Aorta (tissue), 5 donors: ENCODE measurements at regions of chr5 and their contacts with region 1.

Region 1: DNA sequence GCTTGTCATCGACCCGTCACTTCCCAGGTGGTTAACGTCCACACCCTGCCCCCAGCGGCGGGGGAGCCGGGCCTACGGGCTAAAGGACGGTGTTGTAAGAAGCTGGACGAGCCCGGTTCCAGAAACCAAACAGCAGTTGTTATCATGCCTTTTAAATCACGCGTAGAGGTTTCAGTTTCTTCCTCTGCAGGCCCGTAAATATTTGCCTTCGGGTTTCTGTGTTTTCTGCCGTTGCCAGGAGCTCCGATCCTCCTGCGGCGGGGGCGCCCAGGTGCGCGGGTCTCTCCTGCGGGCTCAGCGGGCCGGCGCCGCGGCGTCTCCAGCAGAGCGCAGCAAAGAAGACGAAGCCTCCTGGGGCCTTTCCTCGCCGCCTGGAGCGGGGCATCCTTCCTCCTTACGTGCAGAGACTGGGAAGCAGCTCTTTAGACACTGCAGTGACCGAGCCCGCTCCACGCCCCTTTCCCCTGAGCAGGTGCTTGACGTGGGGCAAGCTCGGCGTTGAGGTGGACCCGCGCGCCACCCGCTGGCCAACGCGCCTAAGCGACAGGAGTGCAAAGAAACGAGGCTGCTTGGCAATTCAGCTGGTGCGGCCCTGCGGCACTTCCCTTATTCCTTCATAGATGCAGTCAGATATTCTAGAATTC is 21.8 kb upstream of the TTC1 start:
- DNase-seq: peak; percentile 82 to 92
- ATAC-seq: peak; percentile 84
- H3K4me3 ChIP-seq: peak overlapping the region in 1 of 2 donors; percentile 8
- H3K27ac ChIP-seq: no peak overlapping the region
- H3K4me1 ChIP-seq: no peaks in the 10 kb centered on the region
- H3K27me3 ChIP-seq: no peaks in the 10 kb centered on the region

Region 2: GRCh38 chr5:159286420-159287035 is 700.6 kb before region 1 on chr5:
- intact Hi-C with region 1: loop called in 1 of 2 experiments (anchors 10 kb)
- DNase-seq: no peak
- ATAC-seq: no peak
- H3K4me3 ChIP-seq: no peak overlapping the region
- H3K27ac ChIP-seq: no peak overlapping the region
- H3K4me1 ChIP-seq: no peaks in the 10 kb centered on the region
- H3K27me3 ChIP-seq: no peaks in the 10 kb centered on the region

Region 3: GRCh38 chr5:159444441-159445082 is 542.6 kb before region 1 on chr5:
- intact Hi-C with region 1: loop called (anchors 1 to 5 kb)
- DNase-seq: no peak
- ATAC-seq: no peak
- H3K4me3 ChIP-seq: no peak overlapping the region
- H3K27ac ChIP-seq: no peak overlapping the region
- H3K4me1 ChIP-seq: no peaks in the 10 kb centered on the region
- H3K27me3 ChIP-seq: no peaks in the 10 kb centered on the region

Region 4: GRCh38 chr5:159773062-159773924 is 213.9 kb before region 1 on chr5:
- intact Hi-C with region 1: loop called in 1 of 2 experiments (anchors 5 kb)
- DNase-seq: peak; percentile 92 to 96
- ATAC-seq: peak; percentile 95
- H3K4me3 ChIP-seq: no peak overlapping the region
- H3K27ac ChIP-seq: peak overlapping the region; percentile 59 to 83
- H3K4me1 ChIP-seq: peaks cover 5 to 6% of the 10 kb centered on the region in 2 donors
- H3K27me3 ChIP-seq: no peaks in the 10 kb centered on the region